ENCODE measurements at regions of chr3 and their contacts with region 1.

Region 1: DNA sequence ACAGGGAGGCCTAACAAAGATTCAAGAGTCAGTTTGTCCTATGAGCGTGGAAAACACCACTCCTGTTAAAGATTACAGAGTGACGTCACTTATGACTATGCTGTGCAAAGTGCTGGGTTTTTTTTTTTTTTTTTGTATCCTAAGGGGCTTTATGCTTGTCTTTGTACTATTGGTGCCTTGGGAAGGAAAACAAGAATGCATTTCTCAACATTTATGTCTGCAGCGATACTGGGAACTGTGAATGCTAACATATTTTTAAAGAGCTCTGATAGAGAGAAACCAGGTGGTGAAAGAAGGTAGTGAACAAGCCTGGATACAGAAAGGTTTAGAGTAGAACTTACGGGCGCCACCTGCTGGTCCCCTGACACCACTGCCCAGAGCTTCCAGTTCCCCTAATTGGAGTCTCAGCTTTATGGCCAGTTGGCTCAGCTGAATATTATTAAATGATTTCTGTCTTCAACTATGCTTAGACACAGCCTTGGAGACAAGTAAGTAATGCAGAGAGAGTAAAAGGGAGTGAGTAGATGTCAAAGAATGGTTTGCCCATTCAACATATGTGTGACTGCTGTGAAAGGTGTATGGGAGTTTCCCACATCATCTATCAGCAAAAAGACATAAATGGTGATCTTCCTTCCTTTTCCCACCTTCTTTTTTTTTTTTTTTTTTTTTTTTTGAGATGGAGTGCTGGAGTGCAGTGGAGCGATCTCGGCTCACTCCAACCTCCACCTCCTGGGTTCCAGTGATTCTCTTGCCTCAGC is 807.9 kb upstream of the CFAP20DC start:
- DNase-seq: peak; percentile 61
- H3K4me3 ChIP-seq: no peak overlapping the region
- H3K27ac ChIP-seq: no peak overlapping the region
- H3K4me1 ChIP-seq: peaks cover 4% of the 10 kb centered on the region
- H3K27me3 ChIP-seq: no peaks in the 10 kb centered on the region
- CTCF ChIP-seq: peak; percentile 87 to 96

Region 2: DNA sequence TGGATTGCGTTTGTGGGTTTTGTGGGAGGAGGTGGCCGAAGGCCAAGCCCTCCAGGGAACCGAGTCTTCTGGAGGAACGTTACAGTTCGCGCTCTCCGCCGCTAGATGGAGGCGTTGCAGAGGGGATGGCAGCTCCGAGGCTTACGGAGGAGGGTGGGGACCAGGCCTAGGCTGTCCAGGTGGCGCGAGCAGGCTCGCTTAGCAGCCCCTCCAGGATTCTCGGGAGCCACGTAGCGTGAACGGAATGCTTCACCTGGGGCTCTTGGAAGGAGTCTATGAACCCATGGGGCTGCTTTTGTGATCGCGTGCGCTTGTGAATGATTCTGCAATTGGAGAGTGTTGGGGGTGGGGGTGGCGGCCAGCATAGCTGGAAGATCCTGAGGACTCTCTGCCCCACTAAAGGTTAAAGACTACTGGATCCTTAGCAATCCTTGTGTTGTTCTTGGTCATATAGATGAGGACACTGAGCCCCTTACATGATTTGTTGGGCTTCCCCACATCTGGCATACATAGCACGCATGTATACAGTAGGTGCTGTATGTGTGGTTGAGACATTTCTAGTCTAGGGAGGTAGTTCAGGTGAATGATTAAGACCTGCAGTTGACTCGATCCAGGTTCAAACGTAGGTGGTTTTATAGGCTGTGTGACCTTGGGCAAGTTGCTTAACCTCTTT is 1216.9 kb before region 1 on chr3:
- CTCF ChIA-PET with region 1: no interaction called
- dilution Hi-C with region 1: loop called (anchors 25 kb)
- in situ Hi-C with region 1: no loop called
- intact Hi-C with region 1: loop called (anchors 1 kb)
- DNase-seq: peak; percentile 64
- H3K4me3 ChIP-seq: no peak overlapping the region
- H3K27ac ChIP-seq: no peak overlapping the region
- H3K4me1 ChIP-seq: peaks cover 10% of the 10 kb centered on the region
- H3K27me3 ChIP-seq: no peaks in the 10 kb centered on the region
- CTCF ChIP-seq: peak; percentile 75 to 96

Region 3: GRCh38 chr3:58824285-58824684 is 1033.5 kb before region 1 on chr3:
- CTCF ChIA-PET with region 1: no interaction called
- dilution Hi-C with region 1: no loop called
- in situ Hi-C with region 1: no loop called
- intact Hi-C with region 1: loop called (anchors 5 kb)
- DNase-seq: peak; percentile 64
- H3K4me3 ChIP-seq: no peak overlapping the region
- H3K27ac ChIP-seq: no peak overlapping the region
- H3K4me1 ChIP-seq: peaks cover 5% of the 10 kb centered on the region
- H3K27me3 ChIP-seq: no peaks in the 10 kb centered on the region
- CTCF ChIP-seq: peak; percentile 85 to 86

Region 4: GRCh38 chr3:59313365-59313764 is 544.4 kb before region 1 on chr3:
- CTCF ChIA-PET with region 1: interaction called, 12 read pairs
- dilution Hi-C with region 1: no loop called
- in situ Hi-C with region 1: no loop called
- intact Hi-C with region 1: loop called (anchors 1 kb)
- DNase-seq: peak; percentile 26
- H3K4me3 ChIP-seq: no peak overlapping the region
- H3K27ac ChIP-seq: no peak overlapping the region
- H3K4me1 ChIP-seq: peaks cover 15% of the 10 kb centered on the region
- H3K27me3 ChIP-seq: no peaks in the 10 kb centered on the region
- CTCF ChIP-seq: peak; percentile 59 to 78

Region 5: GRCh38 chr3:59334585-59334984 is 523.2 kb before region 1 on chr3:
- CTCF ChIA-PET with region 1: no interaction called
- dilution Hi-C with region 1: no loop called
- in situ Hi-C with region 1: no loop called
- intact Hi-C with region 1: no loop called
- DNase-seq: peak; percentile 46
- H3K4me3 ChIP-seq: no peak overlapping the region
- H3K27ac ChIP-seq: no peak overlapping the region
- H3K4me1 ChIP-seq: peaks cover 4% of the 10 kb centered on the region
- H3K27me3 ChIP-seq: no peaks in the 10 kb centered on the region
- CTCF ChIP-seq: no peak

Region 6: DNA sequence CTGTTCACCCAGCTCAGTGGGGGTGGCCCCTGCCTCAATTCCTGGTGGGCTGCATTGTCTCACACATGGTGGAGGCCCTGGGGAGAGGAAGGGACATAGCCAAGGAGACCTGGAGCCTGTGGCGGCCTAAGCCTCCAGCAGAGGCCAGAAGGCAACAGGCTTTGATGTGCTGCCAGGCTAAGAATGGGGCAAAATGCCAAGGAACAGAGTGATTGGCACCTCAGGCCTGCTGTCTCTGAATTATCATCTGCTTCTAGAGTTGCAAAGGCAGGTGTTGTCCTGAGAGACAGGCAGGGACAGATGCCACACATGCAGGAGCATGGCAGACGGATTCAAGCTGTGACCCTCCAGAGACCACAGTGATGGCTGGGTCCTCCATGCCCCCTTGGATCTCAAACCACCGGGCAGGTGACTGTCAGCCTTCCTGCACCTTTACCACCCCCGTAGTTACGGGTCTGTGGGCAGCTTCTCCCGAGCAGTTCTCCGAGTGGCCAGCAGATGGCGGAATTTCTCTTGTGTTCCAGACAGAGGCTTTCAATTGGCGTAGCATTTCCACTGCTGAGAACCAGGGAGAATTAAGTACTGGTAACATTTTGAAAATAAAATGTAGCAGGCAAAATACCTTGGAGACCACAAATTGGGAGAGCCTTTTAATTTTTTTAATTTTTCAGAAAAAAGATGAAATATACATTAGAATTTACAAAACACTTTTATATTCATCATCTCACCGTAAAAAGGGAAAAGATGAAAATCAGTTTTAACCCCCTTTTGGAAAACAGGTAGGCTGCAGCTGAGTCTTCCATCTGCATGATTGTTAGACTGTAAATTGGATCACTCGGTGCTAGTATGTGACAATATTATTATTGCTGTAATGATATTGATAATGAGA is 282.4 kb before region 1 on chr3:
- CTCF ChIA-PET with region 1: no interaction called
- dilution Hi-C with region 1: no loop called
- in situ Hi-C with region 1: loop called (anchors 10 kb)
- intact Hi-C with region 1: loop called (anchors 1 kb)
- DNase-seq: peak; percentile 70
- H3K4me3 ChIP-seq: no peak overlapping the region
- H3K27ac ChIP-seq: no peak overlapping the region
- H3K4me1 ChIP-seq: peaks cover 30% of the 10 kb centered on the region
- H3K27me3 ChIP-seq: no peaks in the 10 kb centered on the region
- CTCF ChIP-seq: peak; percentile 95 to 97

Region 7: GRCh38 chr3:59654123-59654479 is 203.7 kb before region 1 on chr3:
- CTCF ChIA-PET with region 1: no interaction called
- dilution Hi-C with region 1: no loop called
- in situ Hi-C with region 1: no loop called
- intact Hi-C with region 1: loop called (anchors 1 kb)
- DNase-seq: peak; percentile 78
- H3K4me3 ChIP-seq: peak overlapping the region in 1 of 3 experiments; percentile 28
- H3K27ac ChIP-seq: peak overlapping the region; percentile 75
- H3K4me1 ChIP-seq: peaks cover 24% of the 10 kb centered on the region
- H3K27me3 ChIP-seq: no peaks in the 10 kb centered on the region
- CTCF ChIP-seq: no peak

Region 8: GRCh38 chr3:59818033-59818920 is 39.5 kb before region 1 on chr3:
- CTCF ChIA-PET with region 1: no interaction called
- dilution Hi-C with region 1: no loop called
- in situ Hi-C with region 1: no loop called
- intact Hi-C with region 1: loop called (anchors 2 kb)
- DNase-seq: peak; percentile 92
- H3K4me3 ChIP-seq: peak overlapping the region in 1 of 3 experiments; percentile 5
- H3K27ac ChIP-seq: peak overlapping the region; percentile 47
- H3K4me1 ChIP-seq: peaks cover 33% of the 10 kb centered on the region
- H3K27me3 ChIP-seq: no peaks in the 10 kb centered on the region
- CTCF ChIP-seq: no peak

Region 9: DNA sequence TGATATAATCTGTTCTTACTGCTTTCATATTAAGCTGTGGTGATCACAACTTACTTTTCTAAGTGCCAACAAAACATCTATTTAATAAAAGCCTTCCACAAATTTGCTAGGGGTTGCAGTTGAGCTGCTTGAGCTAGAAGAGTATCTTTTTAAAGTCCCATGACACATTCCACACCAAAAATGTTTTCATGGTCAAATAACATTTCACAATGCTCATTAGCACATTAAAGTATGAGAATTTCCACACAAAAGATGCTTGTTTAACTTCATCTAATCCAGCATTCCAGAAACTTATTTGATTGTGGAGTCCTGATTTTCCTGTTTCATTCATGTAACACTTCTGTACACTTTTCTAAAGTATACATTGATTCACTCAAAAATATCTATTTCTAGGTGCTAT is 68.2 kb after region 1 on chr3:
- CTCF ChIA-PET with region 1: no interaction called
- dilution Hi-C with region 1: no loop called
- in situ Hi-C with region 1: no loop called
- intact Hi-C with region 1: no loop called
- DNase-seq: no peak
- H3K4me3 ChIP-seq: no peak overlapping the region
- H3K27ac ChIP-seq: no peak overlapping the region
- H3K4me1 ChIP-seq: no peaks in the 10 kb centered on the region
- H3K27me3 ChIP-seq: no peaks in the 10 kb centered on the region
- CTCF ChIP-seq: no peak

Measured in mammary epithelial cell (primary cell).